ENCODE measurements at regions of chr18 and their contacts with region 1.

Region 1: GRCh38 chr18:4068552-4069158 is 386.5 kb downstream of the DLGAP1 start:
- DNase-seq: peak; percentile 58
- H3K4me3 ChIP-seq: no peak overlapping the region
- H3K27ac ChIP-seq: no peak overlapping the region
- H3K4me1 ChIP-seq: no peaks in the 10 kb centered on the region
- H3K27me3 ChIP-seq: no peaks in the 10 kb centered on the region
- CTCF ChIP-seq: peak; percentile 52 to 66
- POLR2A ChIP-seq: no peak

Region 2: GRCh38 chr18:4017480-4017879 is 51.2 kb before region 1 on chr18:
- CTCF ChIA-PET with region 1: no interaction called
- POLR2A ChIA-PET with region 1: no interaction called
- dilution Hi-C with region 1: no loop called
- intact Hi-C with region 1: loop called (anchors 5 kb)
- DNase-seq: no peak
- H3K4me3 ChIP-seq: no peak overlapping the region
- H3K27ac ChIP-seq: no peak overlapping the region
- H3K4me1 ChIP-seq: no peaks in the 10 kb centered on the region
- H3K27me3 ChIP-seq: peaks cover 0 to 2% of the 10 kb centered on the region in 2 experiments
- CTCF ChIP-seq: no peak
- POLR2A ChIP-seq: no peak

Measured in endothelial cell of umbilical vein (primary cell).